Activated naive CD4-positive, alpha-beta T cell treated with anti-CD3 and anti-CD28 coated beads, Interleukin-2, amount 10 ng/mL, durations not matched to agents 7 days and 5 days (primary cell): ENCODE measurements at regions of chr11 and their contacts with region 1.

Region 1: DNA sequence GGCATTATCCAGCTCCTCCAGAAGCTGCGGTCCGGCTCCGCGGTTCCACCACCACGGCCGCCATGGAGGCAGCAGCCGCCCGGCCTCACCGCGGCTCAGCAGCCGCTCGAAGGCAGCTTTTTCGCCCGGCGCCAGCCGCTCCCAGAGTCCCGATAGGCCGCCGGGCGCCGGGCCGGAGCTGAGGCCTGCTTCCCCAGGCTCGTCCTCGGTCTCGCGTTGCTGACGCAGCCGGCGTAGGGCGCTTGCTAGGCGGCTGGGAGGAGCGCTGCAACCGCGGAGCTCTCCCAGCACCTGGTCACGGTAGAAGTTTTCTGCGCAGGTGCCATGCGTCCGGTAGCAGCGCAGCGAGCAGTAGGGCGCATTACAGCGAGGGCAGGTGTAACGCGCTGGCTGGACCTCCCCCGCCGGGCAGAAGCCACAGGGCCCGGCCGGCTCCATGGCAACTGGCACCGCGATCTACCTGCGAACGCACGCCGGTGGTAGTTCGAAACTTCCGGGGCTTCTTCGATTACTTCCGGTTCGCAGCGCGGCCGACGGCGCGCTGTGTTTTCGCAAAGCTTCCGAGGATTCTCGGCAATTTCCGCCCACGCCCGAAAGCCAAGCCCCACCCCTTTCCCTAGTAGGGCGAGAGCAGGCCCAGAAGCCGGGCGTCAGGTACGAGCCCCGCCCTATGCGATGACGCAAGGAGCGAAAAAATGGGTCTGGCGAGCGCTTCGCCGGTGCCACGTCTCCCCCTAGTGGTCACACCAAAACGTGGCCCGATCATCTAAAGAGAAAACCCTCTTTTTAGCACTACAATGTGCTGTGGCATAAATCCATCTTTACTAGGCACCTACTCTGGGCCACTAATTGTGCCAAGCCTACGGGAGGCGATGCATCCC is at the start of gene ZNHIT2:
- DNase-seq: peak; percentile 100
- H3K4me3 Mint-ChIP-seq: peak within 1 kb of the TSS; percentile 90
- H3K27ac Mint-ChIP-seq: peak within 1 kb of the TSS; percentile 98
- H3K4me1 Mint-ChIP-seq: peaks cover 69% of the 10 kb centered on the region
- H3K27me3 Mint-ChIP-seq: no peaks in the 10 kb centered on the region

Region 2: DNA sequence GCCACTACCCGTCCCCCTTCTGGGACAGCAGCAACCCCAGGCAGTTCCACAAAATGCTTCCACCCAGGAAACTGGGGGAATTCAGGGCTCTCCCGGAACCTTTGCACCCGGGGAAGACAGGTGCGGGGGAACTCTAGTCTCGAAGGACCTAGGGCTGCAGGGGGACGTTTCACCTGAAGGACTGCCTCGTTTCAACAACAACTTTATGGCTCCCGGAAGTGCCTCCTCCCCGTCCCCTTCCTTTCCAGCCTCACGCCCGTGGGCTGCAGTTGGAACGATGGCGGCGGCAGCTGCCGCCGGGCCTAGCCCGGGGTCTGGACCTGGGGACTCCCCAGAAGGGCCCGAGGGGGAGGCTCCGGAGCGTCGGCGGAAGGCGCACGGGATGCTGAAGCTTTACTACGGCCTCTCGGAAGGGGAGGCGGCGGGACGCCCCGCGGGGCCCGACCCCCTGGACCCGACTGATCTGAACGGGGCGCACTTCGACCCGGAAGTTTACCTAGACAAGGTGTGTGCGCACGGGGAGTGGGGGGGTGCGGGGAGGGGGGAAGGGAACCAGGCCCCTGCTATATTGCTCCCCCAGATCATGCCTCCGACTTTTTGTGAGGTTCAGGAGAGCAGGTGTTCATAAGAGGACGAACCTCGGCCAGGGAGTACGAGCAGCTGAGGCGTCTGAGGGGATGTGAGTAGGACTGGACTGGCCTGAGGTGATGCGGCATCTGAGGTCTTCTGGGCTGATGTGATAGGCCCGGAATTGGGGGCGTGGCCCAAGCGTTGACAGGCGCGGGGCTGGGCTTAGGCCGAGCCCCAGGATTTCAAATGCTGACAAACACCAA is 21.3 kb before region 1 on chr11 and contains the start of gene VPS51:
- CTCF ChIA-PET with region 1: interaction called, 60 read pairs
- DNase-seq: peak; percentile 93
- H3K4me3 Mint-ChIP-seq: peak within 1 kb of the TSS; percentile 92
- H3K27ac Mint-ChIP-seq: peak within 1 kb of the TSS; percentile 98
- H3K4me1 Mint-ChIP-seq: peaks cover 22% of the 10 kb centered on the region
- H3K27me3 Mint-ChIP-seq: no peaks in the 10 kb centered on the region

Region 3: GRCh38 chr11:65127473-65128147 is 10.2 kb after region 1 on chr11:
- CTCF ChIA-PET with region 1: no interaction called
- DNase-seq: no peak
- H3K4me3 Mint-ChIP-seq: no peak overlapping the region
- H3K27ac Mint-ChIP-seq: no peak overlapping the region
- H3K4me1 Mint-ChIP-seq: peaks cover 26% of the 10 kb centered on the region
- H3K27me3 Mint-ChIP-seq: no peaks in the 10 kb centered on the region